ENCODE measurements at regions of chr2 and their contacts with region 1.

Region 1: DNA sequence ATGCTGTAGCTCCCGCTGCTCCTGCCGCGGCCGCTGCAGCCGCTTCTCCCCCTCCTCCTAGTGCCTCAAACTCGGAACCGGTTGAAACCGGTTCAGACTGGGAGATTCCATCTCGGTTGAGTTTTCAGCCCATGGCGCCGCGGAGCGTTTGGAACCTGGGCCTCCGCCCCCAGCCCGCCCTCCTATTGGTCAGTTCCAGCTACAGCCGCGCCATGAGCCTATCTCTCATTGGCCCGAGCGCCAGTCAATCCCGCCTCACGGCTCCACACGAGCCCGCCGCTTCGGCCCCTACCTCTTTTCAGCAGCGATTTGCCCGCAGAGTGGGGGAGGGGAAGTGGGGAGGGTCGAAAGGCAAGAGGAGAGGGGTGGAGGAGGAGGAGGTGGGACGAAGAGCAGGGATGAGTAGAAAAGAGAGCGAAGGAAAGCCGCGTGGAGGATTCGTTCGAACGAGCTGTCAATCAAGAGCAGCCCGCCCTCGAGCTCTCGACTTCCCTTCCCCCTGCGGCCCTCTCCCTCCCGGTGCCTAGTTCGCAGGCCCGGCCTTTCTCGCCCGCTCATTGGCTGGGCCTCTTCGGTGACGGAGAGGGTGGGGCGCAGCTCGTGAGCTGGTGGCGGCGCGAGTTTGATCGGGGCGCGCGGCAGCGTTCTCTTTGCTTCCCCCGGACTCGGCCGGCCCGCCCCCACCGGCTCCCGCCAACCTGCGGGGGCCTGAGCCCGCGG is at the start of gene XPO1:
- DNase-seq: peak; percentile 99
- H3K4me3 ChIP-seq: peak within 1 kb of the TSS; percentile 90
- H3K27ac ChIP-seq: peak within 1 kb of the TSS; percentile 95
- H3K27me3 ChIP-seq: no peaks in the 10 kb centered on the region
- CTCF ChIP-seq: no peak
- polyA plus RNA-seq, gene XPO1: 92.6 and 143 TPM in 2 replicates

Region 2: DNA sequence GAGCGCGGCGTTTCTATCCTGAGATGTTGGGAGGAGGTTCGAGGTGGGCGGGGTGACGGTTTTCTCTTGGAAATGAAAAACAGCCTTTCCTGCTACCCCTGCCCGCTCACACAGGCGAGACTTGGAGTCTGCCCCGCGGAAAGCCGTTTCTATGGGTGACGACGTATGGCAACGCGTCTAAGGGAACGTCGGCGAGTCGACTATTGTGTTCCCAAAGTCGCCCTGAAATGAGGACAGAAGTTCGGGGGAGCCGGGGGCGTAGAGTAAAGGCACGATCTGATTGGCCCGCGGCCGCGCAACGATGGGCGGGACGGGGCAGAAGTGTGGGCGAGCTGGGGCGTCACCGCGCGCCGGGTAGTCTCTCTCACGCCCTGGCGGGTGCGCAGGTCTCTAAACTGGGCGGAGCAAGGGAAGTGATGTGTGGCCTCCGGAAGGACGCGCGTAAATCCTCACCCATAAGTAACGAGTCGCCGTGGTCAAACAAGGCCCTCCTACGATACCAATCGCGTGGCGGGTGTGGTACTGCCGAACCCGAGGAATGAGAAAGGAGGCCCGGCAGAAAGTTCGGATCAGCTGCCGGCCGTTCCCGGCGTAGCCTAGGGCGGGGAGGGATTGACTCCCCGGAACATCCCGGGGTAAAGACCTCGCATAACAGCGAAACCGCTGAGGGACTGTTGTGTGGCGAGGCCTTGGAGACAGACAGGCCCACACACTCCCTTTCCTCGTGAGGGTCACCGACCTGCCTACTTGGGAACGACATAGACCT is 225.9 kb after region 1 on chr2:
- CTCF ChIA-PET with region 1: no interaction called
- POLR2A ChIA-PET with region 1: interaction called, 10 read pairs
- DNase-seq: peak; percentile 97
- H3K4me3 ChIP-seq: peak overlapping the region; percentile 82
- H3K27ac ChIP-seq: peak overlapping the region; percentile 100
- H3K27me3 ChIP-seq: no peaks in the 10 kb centered on the region
- CTCF ChIP-seq: no peak

Measured in AG04450 (cell line).